ENCODE measurements at regions of chr7 and their contacts with region 1.

Region 1: DNA sequence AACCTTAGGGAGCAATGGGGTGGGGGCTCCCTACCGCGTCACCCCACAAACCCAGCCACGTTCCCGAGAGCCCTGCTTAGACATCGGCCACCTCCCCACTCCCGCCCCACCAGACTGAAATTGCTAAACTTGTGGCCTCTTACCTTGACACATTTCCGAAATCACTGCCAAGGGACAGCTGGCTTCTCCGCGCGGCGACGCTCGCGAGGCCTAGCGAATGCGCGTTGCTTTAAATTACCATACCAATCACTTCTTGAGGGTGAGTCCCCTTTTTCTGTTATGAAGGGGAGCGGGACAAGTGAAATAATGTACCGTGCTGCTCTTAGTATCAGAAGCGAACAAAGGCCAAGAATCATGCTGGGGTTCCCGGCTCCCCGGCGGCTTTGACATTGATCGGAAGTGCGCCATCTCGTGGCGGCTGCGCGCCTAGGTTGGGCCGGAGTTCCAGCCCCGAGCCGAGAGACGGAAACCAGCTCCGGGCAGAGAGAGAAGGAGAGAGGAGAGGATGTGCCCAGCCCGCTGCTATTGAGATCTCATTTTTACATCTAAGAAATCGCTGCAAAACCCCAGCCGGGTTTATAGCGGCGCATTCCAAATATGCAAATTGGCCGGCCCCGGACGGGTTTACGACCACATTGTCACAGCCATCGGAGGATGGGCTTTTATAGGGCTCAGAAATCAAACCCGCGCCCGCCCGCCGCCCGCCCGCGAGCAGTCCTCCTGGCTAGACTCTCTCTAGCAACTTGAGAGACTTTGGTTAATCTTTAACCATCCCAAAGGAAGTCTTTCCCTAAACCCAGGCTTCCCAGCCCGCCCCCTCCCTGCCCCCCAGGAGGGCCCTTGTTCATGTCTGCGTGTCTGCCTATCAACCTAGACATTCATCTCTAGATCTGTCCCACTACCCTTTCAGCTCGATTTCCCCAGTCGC is 5.3 kb downstream of the HOXA11 start:
- DNase-seq: peak; percentile 81
- ATAC-seq: peak; percentile 88
- H3K4me3 Mint-ChIP-seq: no peak overlapping the region
- H3K27ac Mint-ChIP-seq: no peak overlapping the region
- H3K4me1 Mint-ChIP-seq: peaks cover 10% of the 10 kb centered on the region
- H3K27me3 Mint-ChIP-seq: peaks cover 51% of the 10 kb centered on the region

Region 2: DNA sequence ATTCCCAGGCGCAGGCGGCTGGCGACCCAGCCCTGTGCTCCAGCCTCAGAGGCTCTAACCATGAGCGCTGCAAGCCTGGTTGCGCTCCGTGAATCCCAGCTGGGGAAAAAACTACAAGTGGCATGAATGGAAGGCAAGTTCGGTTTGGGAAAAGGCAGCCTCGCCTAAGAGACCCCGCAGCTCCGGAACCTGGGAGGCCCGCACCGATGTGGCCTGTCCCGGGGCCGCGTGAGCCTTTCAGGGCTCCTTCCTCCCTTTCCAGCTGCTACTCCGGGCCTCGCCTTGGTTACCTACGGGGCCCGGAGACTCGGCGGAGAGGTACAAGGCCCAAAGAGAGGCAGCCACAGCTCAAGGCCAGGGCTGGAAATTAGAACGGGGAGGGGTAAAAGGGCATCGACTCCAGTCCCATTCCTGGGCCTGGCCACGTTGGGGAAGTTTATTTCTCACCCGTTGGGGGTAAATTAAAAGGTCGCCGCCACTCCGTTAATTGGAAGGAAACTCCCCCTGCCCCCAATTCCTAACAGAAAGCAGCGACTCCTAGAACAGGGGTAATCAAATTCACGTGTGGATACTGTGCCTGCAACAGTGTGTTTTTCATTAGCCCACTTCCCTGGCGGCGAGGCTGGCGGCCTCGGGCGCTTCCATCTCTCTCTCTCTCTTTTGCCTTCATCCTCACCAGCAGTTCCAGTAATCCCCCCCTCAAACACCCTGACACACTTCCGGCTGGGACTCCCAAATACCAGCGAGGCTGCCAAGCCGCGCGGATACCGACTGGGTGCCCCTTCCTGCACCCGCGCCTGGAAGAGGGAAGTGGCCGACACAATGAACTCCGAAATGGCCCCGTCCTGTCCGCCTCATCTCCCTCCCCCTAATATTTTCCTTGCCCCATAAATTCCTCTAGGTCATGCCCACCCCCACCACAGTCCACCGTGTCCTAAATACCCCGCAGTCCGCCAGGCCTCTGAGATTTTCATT is 12.9 kb before region 1 on chr7:
- CTCF ChIA-PET with region 1: interaction called, 12 read pairs
- POLR2A ChIA-PET with region 1: no interaction called
- intact Hi-C with region 1: loop called (anchors 1 to 2 kb)
- DNase-seq: peak; percentile 19
- ATAC-seq: no peak
- H3K4me3 Mint-ChIP-seq: no peak overlapping the region
- H3K27ac Mint-ChIP-seq: no peak overlapping the region
- H3K4me1 Mint-ChIP-seq: peaks cover 26% of the 10 kb centered on the region
- H3K27me3 Mint-ChIP-seq: peaks cover 78% of the 10 kb centered on the region

Region 3: DNA sequence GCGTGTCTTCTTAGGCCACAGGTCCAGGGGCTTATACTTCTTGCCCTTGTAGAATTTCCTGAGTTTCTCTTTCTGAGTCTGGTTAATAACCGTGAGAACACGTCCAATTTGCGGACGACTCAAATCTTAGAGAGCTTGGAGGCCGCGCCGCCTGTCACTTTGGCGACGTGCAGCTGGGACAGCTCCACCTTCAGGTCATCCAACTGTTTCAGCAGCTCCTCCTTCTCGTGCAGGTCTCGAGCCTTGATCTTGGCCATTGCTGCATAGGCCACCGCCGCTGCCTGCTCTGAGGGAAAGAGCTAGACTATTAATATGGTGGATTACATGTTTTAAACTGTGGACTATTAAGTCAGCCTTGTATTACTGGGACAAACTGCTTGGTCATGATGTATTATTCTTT is 89.7 kb after region 1 on chr7:
- CTCF ChIA-PET with region 1: no interaction called
- POLR2A ChIA-PET with region 1: no interaction called
- intact Hi-C with region 1: no loop called
- DNase-seq: no peak
- ATAC-seq: no peak
- H3K4me3 Mint-ChIP-seq: no peak overlapping the region
- H3K27ac Mint-ChIP-seq: no peak overlapping the region
- H3K4me1 Mint-ChIP-seq: no peaks in the 10 kb centered on the region
- H3K27me3 Mint-ChIP-seq: peaks cover 8% of the 10 kb centered on the region

Region 4: GRCh38 chr7:27394871-27395270 is 215.1 kb after region 1 on chr7:
- CTCF ChIA-PET with region 1: no interaction called
- POLR2A ChIA-PET with region 1: no interaction called
- intact Hi-C with region 1: no loop called
- DNase-seq: no peak
- ATAC-seq: no peak
- H3K4me3 Mint-ChIP-seq: no peak overlapping the region
- H3K27ac Mint-ChIP-seq: no peak overlapping the region
- H3K4me1 Mint-ChIP-seq: no peaks in the 10 kb centered on the region
- H3K27me3 Mint-ChIP-seq: peaks cover 34% of the 10 kb centered on the region

Measured in activated CD4-positive, alpha-beta T cell treated with anti-CD3 and anti-CD28 coated beads for 36 hours (primary cell).